ENCODE measurements at regions of chr4 and their contacts with region 1.

Region 1: GRCh38 chr4:109375778-109376414 is 57.7 kb upstream of the SEC24B start:
- DNase-seq: no peak
- H3K4me3 ChIP-seq: no peak overlapping the region
- H3K27ac ChIP-seq: no peak overlapping the region
- H3K4me1 ChIP-seq: no peaks in the 10 kb centered on the region
- H3K27me3 ChIP-seq: no peaks in the 10 kb centered on the region
- CTCF ChIP-seq: no peak

Region 2: DNA sequence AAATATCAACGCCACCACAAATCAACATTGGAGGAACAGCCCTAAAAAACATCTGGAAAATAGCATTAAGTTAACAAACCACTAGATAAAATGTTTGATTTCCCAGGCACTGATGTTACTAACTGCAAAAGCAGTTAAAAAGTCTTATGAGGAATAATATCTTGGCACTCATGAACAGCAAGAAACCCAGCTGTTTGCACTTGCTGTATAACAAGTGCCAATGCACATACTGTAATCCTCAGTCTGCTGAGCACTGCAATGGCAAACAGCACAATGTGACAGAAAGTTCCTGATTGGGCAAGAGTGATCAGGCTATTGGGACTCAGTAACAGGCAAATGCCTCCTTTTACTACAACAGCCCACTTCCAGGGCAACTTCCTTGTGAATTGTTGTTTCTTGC is 36.9 kb after region 1 on chr4:
- CTCF ChIA-PET with region 1: no interaction called
- POLR2A ChIA-PET with region 1: interaction called, 11 read pairs
- intact Hi-C with region 1: no loop called
- DNase-seq: no peak
- H3K4me3 ChIP-seq: no peak overlapping the region
- H3K27ac ChIP-seq: no peak overlapping the region
- H3K4me1 ChIP-seq: no peaks in the 10 kb centered on the region
- H3K27me3 ChIP-seq: no peaks in the 10 kb centered on the region
- CTCF ChIP-seq: no peak